Body of pancreas (tissue), 4 donors: ENCODE measurements at regions of chr10 and their contacts with region 1.

Region 1: DNA sequence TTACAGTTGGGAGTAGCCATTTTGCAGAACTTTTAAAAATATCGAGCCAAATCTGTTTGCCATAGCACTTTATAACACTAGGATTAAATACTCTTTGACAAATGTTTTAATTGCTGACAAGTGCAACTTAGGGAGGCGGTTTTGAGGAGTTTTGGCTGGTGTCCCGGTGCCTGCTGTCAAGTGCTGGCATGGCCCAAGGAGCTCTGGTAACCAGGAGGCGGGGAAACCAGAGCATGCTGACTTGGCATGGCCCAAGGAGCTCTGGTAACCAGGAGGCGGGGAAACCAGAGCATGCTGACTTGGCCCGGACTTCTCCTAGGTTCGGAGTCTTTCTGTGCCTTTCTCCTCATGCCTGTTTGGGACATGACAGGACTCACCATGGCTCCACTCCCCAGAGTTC is 30.8 kb upstream of the ZNF32 start:
- DNase-seq: peak; percentile 94 to 98 (median 96)
- ATAC-seq: peak; percentile 97
- H3K4me3 ChIP-seq: no peak overlapping the region
- H3K27ac ChIP-seq: peak overlapping the region; percentile 1 to 63 (median 42)
- H3K4me1 ChIP-seq: peaks cover 25% of the 10 kb centered on the region
- H3K27me3 ChIP-seq: no peaks in the 10 kb centered on the region
- CTCF ChIP-seq: peak in 2 of 7 experiments; percentile 9 to 13
- POLR2A ChIP-seq: no peak

Region 2: GRCh38 chr10:43436400-43437140 is 242.9 kb before region 1 on chr10 and contains the start of gene ZNF487:
- intact Hi-C with region 1: no loop called
- DNase-seq: peak; percentile 89 to 92 (median 90)
- ATAC-seq: peak; percentile 95
- H3K4me3 ChIP-seq: peak within 1 kb of the TSS; percentile 66 to 67
- H3K27ac ChIP-seq: peak within 1 kb of the TSS; percentile 96 to 100 (median 98)
- H3K4me1 ChIP-seq: peaks cover 13% of the 10 kb centered on the region
- H3K27me3 ChIP-seq: no peaks in the 10 kb centered on the region
- CTCF ChIP-seq: peak in 4 of 7 experiments; percentile 9 to 42 (median 34)
- POLR2A ChIP-seq: peak; percentile 87 to 95 (median 95)
- total RNA-seq, gene ZNF487: 1.6 to 7.5 TPM

Region 3: DNA sequence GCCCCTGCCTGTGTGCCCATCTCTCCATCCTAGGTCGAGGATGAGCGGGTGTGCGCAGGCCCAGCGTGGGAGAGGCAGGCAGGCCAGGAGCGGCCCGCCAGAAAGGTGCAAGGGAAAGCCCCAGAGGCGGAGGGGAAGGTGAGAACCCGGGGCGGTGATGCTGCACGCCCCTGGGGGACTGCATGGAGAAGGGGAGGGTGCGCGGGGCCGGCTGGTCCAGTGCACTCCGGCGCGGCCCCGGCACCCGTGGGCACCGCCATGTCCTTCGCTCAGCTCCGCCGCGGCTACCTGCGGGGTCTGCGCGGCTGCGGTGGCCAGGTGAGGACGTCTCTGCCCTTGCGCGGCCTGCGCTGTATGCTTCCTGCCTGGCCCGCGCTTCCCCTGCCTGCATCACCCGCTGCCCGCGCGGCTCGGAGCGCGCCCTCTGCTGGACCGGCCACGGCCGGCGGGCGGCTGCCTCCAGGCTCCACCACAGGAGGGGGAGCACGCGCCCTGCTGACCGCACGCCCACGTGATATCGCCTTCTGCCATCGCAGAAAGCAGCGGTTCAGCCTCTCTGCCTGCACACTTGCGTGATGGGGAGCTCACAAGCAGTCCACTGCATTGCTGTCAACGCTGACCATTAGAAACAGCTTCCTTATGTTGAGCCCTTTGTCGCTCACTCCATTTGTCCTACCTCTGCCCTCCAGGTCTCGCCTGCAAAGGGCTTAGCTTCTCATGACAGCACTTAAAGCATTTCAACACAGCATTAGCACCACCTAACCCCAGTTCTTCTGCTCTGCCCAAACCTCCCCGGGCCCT is 631.5 kb after region 1 on chr10:
- intact Hi-C with region 1: loop called (anchors 5 kb)
- DNase-seq: peak; percentile 90 to 94 (median 92)
- ATAC-seq: peak; percentile 100
- H3K4me3 ChIP-seq: no peak overlapping the region
- H3K27ac ChIP-seq: peak overlapping the region in 2 of 4 donors; percentile 21 to 23
- H3K4me1 ChIP-seq: peaks cover 10% of the 10 kb centered on the region
- H3K27me3 ChIP-seq: no peaks in the 10 kb centered on the region
- CTCF ChIP-seq: peak; percentile 91 to 99 (median 95)
- POLR2A ChIP-seq: peak; percentile 37 to 60 (median 58)